Vagina (tissue), 2 donors: ENCODE measurements at regions of chr12 and their contacts with region 1.

Region 1: DNA sequence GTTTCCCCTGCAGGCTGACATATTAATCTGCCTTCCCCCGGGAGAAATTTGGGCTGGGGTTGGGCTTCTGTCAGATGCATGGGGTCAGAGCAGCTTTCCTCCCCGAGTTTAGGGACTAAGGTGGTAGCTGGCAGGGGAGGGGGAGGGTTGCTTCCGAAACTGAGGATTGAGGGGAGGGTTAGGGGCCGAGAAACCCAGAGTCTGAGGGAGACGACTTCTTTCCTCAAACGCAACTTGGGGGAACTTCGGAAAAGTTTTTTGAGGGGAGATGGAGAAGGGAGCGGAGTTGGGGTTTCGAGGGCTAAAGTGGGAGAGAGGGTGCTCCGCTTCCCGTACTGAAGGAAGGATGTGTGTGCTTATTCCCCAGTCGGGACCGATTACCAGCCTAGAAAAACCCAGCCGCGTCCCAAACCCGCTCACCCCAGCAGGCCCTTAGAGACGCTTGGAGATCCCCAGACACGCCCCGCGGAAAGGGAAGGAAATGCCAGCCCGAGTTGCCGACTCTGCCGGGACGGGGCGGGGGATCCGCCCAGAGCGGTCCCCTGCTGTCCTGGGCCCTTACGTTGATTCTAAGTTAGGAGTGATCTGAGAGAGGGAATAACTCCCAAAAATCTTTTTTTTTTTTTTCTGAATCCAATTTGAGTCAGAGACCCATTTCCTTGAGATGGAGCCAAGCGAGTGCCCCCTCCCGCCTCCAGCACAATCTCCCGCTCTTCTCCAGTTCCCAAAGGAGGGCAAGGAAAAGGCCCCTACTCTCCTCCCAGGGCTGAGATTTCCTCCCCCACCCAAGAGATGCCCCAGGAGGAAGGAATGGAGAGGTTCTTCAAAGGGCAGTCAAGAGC is 61.9 kb downstream of the SMUG1 start:
- DNase-seq: peak in 1 of 2 donors; percentile 87
- H3K4me3 ChIP-seq: peak overlapping the region; percentile 58
- H3K27ac ChIP-seq: peak overlapping the region; percentile 59
- H3K4me1 ChIP-seq: peaks cover 21% of the 10 kb centered on the region
- H3K27me3 ChIP-seq: no peaks in the 10 kb centered on the region
- CTCF ChIP-seq: no peak
- POLR2A ChIP-seq: no peak

Region 2: GRCh38 chr12:54017878-54018467 is 108.9 kb before region 1 on chr12:
- intact Hi-C with region 1: loop called (anchors 5 kb)
- DNase-seq: no peak
- H3K4me3 ChIP-seq: peak overlapping the region; percentile 27 to 38
- H3K27ac ChIP-seq: no peak overlapping the region
- H3K4me1 ChIP-seq: peaks cover 39% of the 10 kb centered on the region
- H3K27me3 ChIP-seq: peaks cover 29% of the 10 kb centered on the region
- CTCF ChIP-seq: no peak
- POLR2A ChIP-seq: no peak